A549 (cell line): ENCODE measurements at regions of chr7 and their contacts with region 1.

Region 1: DNA sequence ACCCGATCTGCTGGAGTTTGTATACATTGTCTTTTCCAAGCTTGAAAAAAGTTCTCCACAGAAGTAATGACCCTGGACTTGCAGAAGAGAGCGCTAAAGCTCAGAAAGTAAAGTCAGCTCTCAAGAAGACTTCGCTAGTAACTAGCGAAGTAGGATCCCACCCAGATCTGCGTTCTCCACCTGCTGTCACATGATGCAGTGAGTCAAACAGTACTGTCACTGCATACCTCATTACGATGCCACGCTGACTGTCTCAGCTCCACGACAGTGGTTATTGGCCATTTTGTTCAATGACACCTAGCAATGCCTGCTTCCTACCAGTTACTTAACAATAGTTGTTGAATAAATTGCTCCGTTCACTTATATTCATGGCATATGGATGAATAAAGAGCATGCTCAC is 29.7 kb upstream of the SEC61G start:
- DNase-seq: peak; percentile 94 to 96
- ATAC-seq: peak; percentile 97 to 100
- H3K4me3 ChIP-seq: no peak overlapping the region
- H3K27ac ChIP-seq: peak overlapping the region; percentile 68 to 82
- H3K4me1 ChIP-seq: peaks cover 29% of the 10 kb centered on the region
- CTCF ChIP-seq: peak; percentile 89
- EP300 ChIP-seq: no peak
- POLR2A ChIP-seq: no peak
- RAD21 ChIP-seq: peak; percentile 96 to 97

Region 2: DNA sequence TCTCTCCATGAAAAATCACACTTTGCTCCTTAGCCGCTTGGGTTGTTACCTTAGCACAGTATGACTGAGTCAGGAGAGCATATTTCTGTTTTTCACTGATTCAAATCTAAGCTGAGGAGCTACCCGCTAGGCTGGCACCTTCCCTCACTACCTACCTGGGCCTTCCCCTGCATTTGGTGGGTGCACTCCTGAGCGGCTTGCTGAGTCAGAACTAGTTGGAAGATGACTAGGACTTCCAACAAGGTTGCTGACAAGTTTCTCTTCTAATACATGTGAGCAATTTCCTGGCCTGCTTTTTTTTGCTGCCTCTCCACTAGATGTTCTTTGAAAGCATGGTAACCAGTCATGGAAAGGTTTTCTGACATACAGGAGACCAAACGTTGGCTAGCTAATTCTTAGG is 14.2 kb after region 1 on chr7:
- CTCF ChIA-PET with region 1: interaction called, 10 read pairs
- POLR2A ChIA-PET with region 1: no interaction called
- DNase-seq: no peak
- ATAC-seq: no peak
- H3K4me3 ChIP-seq: no peak overlapping the region
- H3K27ac ChIP-seq: peak overlapping the region in 1 of 2 experiments; percentile 41; a peak in 1 of 6 replicates
- H3K4me1 ChIP-seq: no peaks in the 10 kb centered on the region
- CTCF ChIP-seq: no peak
- EP300 ChIP-seq: no peak
- POLR2A ChIP-seq: no peak
- RAD21 ChIP-seq: no peak

Region 3: DNA sequence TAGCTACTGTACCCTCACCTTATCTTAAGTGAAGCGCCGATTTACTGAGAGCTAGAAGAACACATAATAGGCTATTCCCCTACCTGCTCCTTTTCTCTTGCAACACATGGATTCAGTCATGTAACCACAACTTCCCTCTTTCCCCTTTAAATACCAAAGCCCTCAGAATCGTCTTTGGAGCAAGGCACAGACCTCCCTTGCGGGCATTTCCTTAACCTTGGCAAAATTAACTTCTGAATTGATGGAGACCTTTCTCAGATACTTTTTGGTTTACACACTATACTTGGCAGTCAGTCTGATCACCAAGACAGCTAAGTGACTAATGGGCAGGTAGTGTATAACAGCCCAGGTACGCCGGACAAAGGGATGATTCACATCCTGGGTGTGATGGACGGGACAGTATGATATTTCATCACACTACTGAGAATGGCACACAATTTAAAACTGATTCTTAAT is 43.0 kb after region 1 on chr7:
- CTCF ChIA-PET with region 1: interaction called, 15 read pairs
- POLR2A ChIA-PET with region 1: no interaction called
- DNase-seq: peak in 1 of 2 experiments; percentile 63
- ATAC-seq: peak; percentile 69 to 81
- H3K4me3 ChIP-seq: peak overlapping the region; percentile 24; the same call in 2 of the 3 replicates
- H3K27ac ChIP-seq: peak overlapping the region; percentile 82 to 88
- H3K4me1 ChIP-seq: peaks cover 30% of the 10 kb centered on the region
- CTCF ChIP-seq: no peak
- EP300 ChIP-seq: peak; percentile 65 to 81; a peak in 2 of 5 replicates
- POLR2A ChIP-seq: no peak
- RAD21 ChIP-seq: 0 out of 5 replicates have a peak, but pooled peaks of 1 of the 2 experiments have one; percentile 8

Region 4: GRCh38 chr7:54839538-54840213 is 51.0 kb after region 1 on chr7:
- CTCF ChIA-PET with region 1: interaction called, 69 read pairs
- POLR2A ChIA-PET with region 1: no interaction called
- DNase-seq: peak; percentile 80 to 81
- ATAC-seq: peak; percentile 99
- H3K4me3 ChIP-seq: no peak overlapping the region
- H3K27ac ChIP-seq: peak overlapping the region; percentile 65 to 71
- H3K4me1 ChIP-seq: peaks cover 52% of the 10 kb centered on the region
- CTCF ChIP-seq: peak; percentile 83
- EP300 ChIP-seq: no peak
- POLR2A ChIP-seq: no peak
- RAD21 ChIP-seq: peak; percentile 94 to 97

Region 5: GRCh38 chr7:55018361-55019190 is 229.9 kb after region 1 on chr7 and contains the start of gene EGFR:
- CTCF ChIA-PET with region 1: interaction called, 14 read pairs
- POLR2A ChIA-PET with region 1: interaction called, 4 read pairs
- DNase-seq: peak; percentile 75 to 78
- ATAC-seq: peak; percentile 86
- H3K4me3 ChIP-seq: peak within 1 kb of the TSS; percentile 95
- H3K27ac ChIP-seq: peak within 1 kb of the TSS; percentile 97 to 98
- H3K4me1 ChIP-seq: peaks cover 32% of the 10 kb centered on the region
- CTCF ChIP-seq: no peak
- EP300 ChIP-seq: no peak
- POLR2A ChIP-seq: peak; percentile 72
- RAD21 ChIP-seq: peak; percentile 9 to 38; a peak in 3 of 5 replicates
- polyA plus RNA-seq, gene EGFR: 59.5 and 61.4 TPM in 2 replicates

Region 6: GRCh38 chr7:55053651-55054571 is 265.2 kb after region 1 on chr7:
- CTCF ChIA-PET with region 1: interaction called, 37 read pairs
- POLR2A ChIA-PET with region 1: no interaction called
- DNase-seq: no peak
- ATAC-seq: no peak
- H3K4me3 ChIP-seq: no peak overlapping the region
- H3K27ac ChIP-seq: peak overlapping the region; percentile 85 to 92
- H3K4me1 ChIP-seq: peaks cover 93% of the 10 kb centered on the region
- CTCF ChIP-seq: no peak
- EP300 ChIP-seq: no peak
- POLR2A ChIP-seq: no peak
- RAD21 ChIP-seq: no peak